Heart left ventricle (tissue), 16 donors: ENCODE measurements at regions of chr10 and their contacts with region 1.

Region 1: GRCh38 chr10:59465088-59465487 is 102.7 kb upstream of the FAM13C start:
- DNase-seq: no peak
- ATAC-seq: peak in 1 of 4 donors; percentile 52
- H3K4me3 ChIP-seq: no peak overlapping the region
- H3K27ac ChIP-seq: no peak overlapping the region
- H3K4me1 ChIP-seq: peaks cover 0 to 11% (median 0%) of the 10 kb centered on the region in 12 donors
- H3K27me3 ChIP-seq: no peaks in the 10 kb centered on the region
- CTCF ChIP-seq: peak in 10 of 12 donors; percentile 22 to 63 (median 44)
- POLR2A ChIP-seq: no peak

Region 2: DNA sequence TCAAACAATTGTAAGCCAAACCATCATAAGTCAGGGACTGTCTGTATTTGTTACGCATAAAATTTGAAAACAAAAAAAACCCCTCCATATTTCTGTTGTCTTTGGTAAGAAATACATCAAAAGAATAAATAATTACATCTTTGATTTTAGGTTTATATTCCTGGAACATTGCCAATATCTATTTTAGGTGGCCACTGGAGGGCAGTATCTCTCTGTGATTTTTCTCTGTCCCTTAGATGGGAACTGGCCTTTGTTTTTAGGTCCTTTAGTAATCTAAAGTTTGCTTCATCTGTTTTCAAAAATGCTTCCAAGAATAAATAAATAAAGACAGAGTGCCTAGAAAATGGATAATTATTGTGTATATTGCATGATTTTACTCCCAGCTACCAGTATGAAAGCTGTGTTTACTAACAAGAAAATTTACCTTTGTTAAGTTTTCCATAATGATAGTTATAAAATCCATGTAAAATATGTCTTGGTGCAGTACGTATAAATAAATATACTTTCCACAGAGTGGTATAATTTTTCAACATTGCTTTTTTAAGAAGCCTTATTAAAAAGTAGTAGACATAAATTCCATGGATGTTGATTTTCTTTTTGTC is 224.4 kb before region 1 on chr10:
- intact Hi-C with region 1: loop called (anchors 1 to 5 kb)
- DNase-seq: peak in 1 of 5 donors; percentile 9
- ATAC-seq: no peak
- H3K4me3 ChIP-seq: no peak overlapping the region
- H3K27ac ChIP-seq: no peak overlapping the region
- H3K4me1 ChIP-seq: peaks cover 0 to 4% (median 0%) of the 10 kb centered on the region in 12 donors
- H3K27me3 ChIP-seq: no peaks in the 10 kb centered on the region
- CTCF ChIP-seq: peak; percentile 45 to 85 (median 66)
- POLR2A ChIP-seq: no peak

Region 3: GRCh38 chr10:59245686-59246085 is 219.4 kb before region 1 on chr10:
- intact Hi-C with region 1: loop called (anchors 1 to 5 kb)
- DNase-seq: no peak
- ATAC-seq: no peak
- H3K4me3 ChIP-seq: no peak overlapping the region
- H3K27ac ChIP-seq: no peak overlapping the region
- H3K4me1 ChIP-seq: peaks cover 0 to 4% (median 0%) of the 10 kb centered on the region in 12 donors
- H3K27me3 ChIP-seq: no peaks in the 10 kb centered on the region
- CTCF ChIP-seq: no peak
- POLR2A ChIP-seq: no peak